B cell (primary cell): ENCODE measurements at regions of chr7 and their contacts with region 1.

Region 1: DNA sequence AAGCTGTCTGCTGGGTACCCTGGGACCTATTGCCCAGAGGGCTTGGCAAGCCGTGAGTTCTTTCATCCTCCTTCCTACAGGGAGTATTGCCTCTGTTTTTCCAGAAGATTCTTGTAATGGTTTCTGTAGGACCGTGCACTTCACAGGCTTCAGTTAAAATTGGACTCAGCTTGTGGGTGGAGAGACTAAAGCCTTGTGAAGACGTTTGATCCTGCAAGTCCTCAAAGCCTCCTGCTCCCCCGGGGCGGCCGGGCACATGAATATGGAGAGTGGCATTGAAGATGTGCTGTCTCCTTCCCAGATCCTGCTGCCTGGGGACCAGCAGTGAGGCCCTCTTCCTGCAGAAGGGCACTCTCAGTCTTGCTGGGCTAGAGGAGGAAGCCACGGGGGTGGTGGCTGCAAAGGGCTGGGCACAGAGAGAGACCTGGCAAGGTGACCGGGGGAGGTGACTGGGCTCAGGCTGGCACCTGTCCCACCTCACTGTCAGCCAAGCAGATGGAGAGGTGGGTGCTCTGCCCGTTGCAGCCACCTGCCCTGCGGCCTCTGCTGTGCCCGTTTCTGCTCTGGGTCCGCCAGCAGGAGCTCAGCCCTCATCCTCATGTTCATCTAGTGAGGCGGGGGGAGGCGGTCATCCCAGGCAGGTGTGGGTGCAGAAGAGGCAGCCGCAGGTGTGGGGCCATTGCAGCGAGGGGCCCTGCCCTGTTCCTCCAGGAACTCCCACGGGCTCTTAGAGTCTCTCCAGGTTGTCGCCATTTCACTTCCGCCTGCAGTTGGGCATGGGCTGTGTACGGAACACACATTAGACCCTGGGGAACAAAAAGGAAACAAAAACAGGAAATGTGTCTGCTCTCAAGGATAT is 55.7 kb downstream of the TMEM209 start:
- DNase-seq: peak; percentile 83
- ATAC-seq: peak; percentile 79
- H3K4me3 ChIP-seq: peak overlapping the region in 3 of 5 experiments; percentile 8 to 34 (median 29)
- H3K4me3 Mint-ChIP-seq: peak overlapping the region; percentile 77
- H3K27ac ChIP-seq: peak overlapping the region; percentile 76 to 82
- H3K27ac Mint-ChIP-seq: peak overlapping the region; percentile 95
- H3K4me1 ChIP-seq: peaks cover 34 to 75% of the 10 kb centered on the region in 2 donors
- H3K4me1 Mint-ChIP-seq: peaks cover 48% of the 10 kb centered on the region
- H3K27me3 ChIP-seq: no peaks in the 10 kb centered on the region
- H3K27me3 Mint-ChIP-seq: no peaks in the 10 kb centered on the region
- CTCF ChIP-seq: no peak

Region 2: GRCh38 chr7:130114374-130115135 is 35.0 kb before region 1 on chr7:
- CTCF ChIA-PET with region 1: no interaction called
- POLR2A ChIA-PET with region 1: no interaction called
- intact Hi-C with region 1: no loop called
- DNase-seq: peak; percentile 50
- ATAC-seq: peak; percentile 41
- H3K4me3 ChIP-seq: peak overlapping the region in 1 of 5 experiments; percentile 18
- H3K4me3 Mint-ChIP-seq: peak overlapping the region; percentile 35
- H3K27ac ChIP-seq: peak overlapping the region in 1 of 2 donors; percentile 60
- H3K27ac Mint-ChIP-seq: peak overlapping the region; percentile 72
- H3K4me1 ChIP-seq: peaks cover 17 to 19% of the 10 kb centered on the region in 2 donors
- H3K4me1 Mint-ChIP-seq: peaks cover 31% of the 10 kb centered on the region
- H3K27me3 ChIP-seq: no peaks in the 10 kb centered on the region
- H3K27me3 Mint-ChIP-seq: no peaks in the 10 kb centered on the region
- CTCF ChIP-seq: no peak

Region 3: GRCh38 chr7:130127821-130128317 is 21.6 kb before region 1 on chr7:
- CTCF ChIA-PET with region 1: no interaction called
- POLR2A ChIA-PET with region 1: no interaction called
- intact Hi-C with region 1: no loop called
- DNase-seq: no peak
- ATAC-seq: no peak
- H3K4me3 ChIP-seq: no peak overlapping the region
- H3K4me3 Mint-ChIP-seq: no peak overlapping the region
- H3K27ac ChIP-seq: no peak overlapping the region
- H3K27ac Mint-ChIP-seq: no peak overlapping the region
- H3K4me1 ChIP-seq: no peaks in the 10 kb centered on the region
- H3K4me1 Mint-ChIP-seq: no peaks in the 10 kb centered on the region
- H3K27me3 ChIP-seq: no peaks in the 10 kb centered on the region
- H3K27me3 Mint-ChIP-seq: no peaks in the 10 kb centered on the region
- CTCF ChIP-seq: no peak

Region 4: GRCh38 chr7:130205084-130205947 is 55.8 kb after region 1 on chr7 and contains the start of gene TMEM209:
- CTCF ChIA-PET with region 1: no interaction called
- POLR2A ChIA-PET with region 1: interaction called, 3 read pairs
- intact Hi-C with region 1: loop called (anchors 1 kb)
- DNase-seq: peak; percentile 96
- ATAC-seq: peak; percentile 97
- H3K4me3 ChIP-seq: peak within 1 kb of the TSS; percentile 83 to 100 (median 89)
- H3K4me3 Mint-ChIP-seq: peak within 1 kb of the TSS; percentile 97
- H3K27ac ChIP-seq: peak within 1 kb of the TSS; percentile 86 to 87
- H3K27ac Mint-ChIP-seq: peak within 1 kb of the TSS; percentile 96
- H3K4me1 ChIP-seq: peaks cover 4 to 14% of the 10 kb centered on the region in 2 donors
- H3K4me1 Mint-ChIP-seq: peaks cover 15% of the 10 kb centered on the region
- H3K27me3 ChIP-seq: no peaks in the 10 kb centered on the region
- H3K27me3 Mint-ChIP-seq: peaks cover 6% of the 10 kb centered on the region
- CTCF ChIP-seq: no peak
- total RNA-seq, gene TMEM209: 33.2 and 35.8 TPM in 2 replicates